ENCODE measurements at regions of chr21 and their contacts with region 1.

Region 1: GRCh38 chr21:31173881-31174555 is 135.7 kb upstream of the KRTAP19-8 start:
- DNase-seq: no peak
- H3K4me3 ChIP-seq: no peak overlapping the region
- H3K27ac ChIP-seq: no peak overlapping the region
- H3K4me1 ChIP-seq: no peaks in the 10 kb centered on the region
- H3K27me3 ChIP-seq: no peaks in the 10 kb centered on the region
- CTCF ChIP-seq: no peak

Region 2: GRCh38 chr21:31142600-31142999 is 31.4 kb before region 1 on chr21:
- CTCF ChIA-PET with region 1: interaction called, 14 read pairs
- POLR2A ChIA-PET with region 1: no interaction called
- intact Hi-C with region 1: no loop called
- DNase-seq: no peak
- H3K4me3 ChIP-seq: no peak overlapping the region
- H3K27ac ChIP-seq: no peak overlapping the region
- H3K4me1 ChIP-seq: no peaks in the 10 kb centered on the region
- H3K27me3 ChIP-seq: no peaks in the 10 kb centered on the region
- CTCF ChIP-seq: no peak